Activated CD4-positive, alpha-beta memory T cell treated with anti-CD3 and anti-CD28 coated beads, Interleukin-2, amount 10 ng/mL, durations not matched to agents 7 days and 5 days (primary cell): ENCODE measurements at regions of chr16 and their contacts with region 1.

Region 1: GRCh38 chr16:17556276-17557052 is 85.7 kb upstream of the XYLT1 start:
- DNase-seq: no peak
- H3K4me3 Mint-ChIP-seq: no peak overlapping the region
- H3K27ac Mint-ChIP-seq: no peak overlapping the region
- H3K4me1 Mint-ChIP-seq: peaks cover 7% of the 10 kb centered on the region
- H3K27me3 Mint-ChIP-seq: peaks cover 21% of the 10 kb centered on the region

Region 2: GRCh38 chr16:17544785-17545184 is 11.7 kb before region 1 on chr16:
- CTCF ChIA-PET with region 1: interaction called, 10 read pairs
- POLR2A ChIA-PET with region 1: no interaction called
- DNase-seq: peak; percentile 19
- H3K4me3 Mint-ChIP-seq: no peak overlapping the region
- H3K27ac Mint-ChIP-seq: no peak overlapping the region
- H3K4me1 Mint-ChIP-seq: no peaks in the 10 kb centered on the region
- H3K27me3 Mint-ChIP-seq: no peaks in the 10 kb centered on the region

Region 3: DNA sequence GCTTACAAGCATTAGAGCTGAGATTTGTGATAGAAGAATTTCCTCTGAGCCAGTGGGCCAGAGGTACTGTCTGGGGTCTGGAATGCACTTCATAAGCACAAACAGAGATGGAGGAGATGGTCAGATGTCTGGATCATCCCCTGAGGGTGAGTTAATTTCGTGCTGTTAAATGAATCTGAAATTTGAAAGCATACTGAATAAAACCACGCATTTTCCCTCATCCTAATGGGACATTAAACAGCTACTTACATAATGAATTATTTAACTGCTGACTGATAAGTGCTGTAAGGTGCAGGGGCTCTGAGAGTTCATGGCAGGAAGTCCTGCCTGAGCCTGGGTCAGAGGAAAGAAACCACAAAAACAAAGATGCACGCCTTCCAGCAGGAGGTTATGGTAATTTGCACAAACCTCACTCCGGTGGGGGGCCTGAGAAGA is 50.6 kb after region 1 on chr16:
- CTCF ChIA-PET with region 1: no interaction called
- POLR2A ChIA-PET with region 1: no interaction called
- DNase-seq: no peak
- H3K4me3 Mint-ChIP-seq: no peak overlapping the region
- H3K27ac Mint-ChIP-seq: no peak overlapping the region
- H3K4me1 Mint-ChIP-seq: peaks cover 17% of the 10 kb centered on the region
- H3K27me3 Mint-ChIP-seq: peaks cover 2% of the 10 kb centered on the region